Colonic mucosa (tissue), 4 donors: ENCODE measurements at regions of chr16 and their contacts with region 1.

Region 1: DNA sequence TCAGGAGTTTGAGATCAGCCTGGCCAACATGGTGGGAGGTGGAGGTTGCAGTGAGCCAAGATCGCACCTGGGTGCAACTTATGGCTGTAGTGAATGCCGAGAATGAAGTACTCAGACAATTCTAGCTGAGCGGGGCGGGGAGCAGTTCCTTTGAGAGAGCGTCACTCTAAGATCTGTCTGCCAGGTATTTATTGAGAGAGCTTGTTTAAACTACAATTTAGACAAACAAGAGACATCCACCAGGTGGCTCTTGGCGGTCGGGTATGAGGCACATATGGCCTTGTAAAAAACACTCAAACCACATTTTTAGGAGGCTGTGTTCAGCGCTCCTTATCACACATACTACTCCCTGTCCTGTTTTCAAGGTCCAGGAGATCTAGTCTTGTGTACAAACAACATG is 40.6 kb upstream of the CDH1 start:
- DNase-seq: peak; percentile 65
- H3K4me3 ChIP-seq: no peak overlapping the region
- H3K27ac ChIP-seq: no peak overlapping the region
- H3K4me1 ChIP-seq: no peaks in the 10 kb centered on the region
- H3K27me3 ChIP-seq: no peaks in the 10 kb centered on the region
- CTCF ChIP-seq: no peak

Region 2: DNA sequence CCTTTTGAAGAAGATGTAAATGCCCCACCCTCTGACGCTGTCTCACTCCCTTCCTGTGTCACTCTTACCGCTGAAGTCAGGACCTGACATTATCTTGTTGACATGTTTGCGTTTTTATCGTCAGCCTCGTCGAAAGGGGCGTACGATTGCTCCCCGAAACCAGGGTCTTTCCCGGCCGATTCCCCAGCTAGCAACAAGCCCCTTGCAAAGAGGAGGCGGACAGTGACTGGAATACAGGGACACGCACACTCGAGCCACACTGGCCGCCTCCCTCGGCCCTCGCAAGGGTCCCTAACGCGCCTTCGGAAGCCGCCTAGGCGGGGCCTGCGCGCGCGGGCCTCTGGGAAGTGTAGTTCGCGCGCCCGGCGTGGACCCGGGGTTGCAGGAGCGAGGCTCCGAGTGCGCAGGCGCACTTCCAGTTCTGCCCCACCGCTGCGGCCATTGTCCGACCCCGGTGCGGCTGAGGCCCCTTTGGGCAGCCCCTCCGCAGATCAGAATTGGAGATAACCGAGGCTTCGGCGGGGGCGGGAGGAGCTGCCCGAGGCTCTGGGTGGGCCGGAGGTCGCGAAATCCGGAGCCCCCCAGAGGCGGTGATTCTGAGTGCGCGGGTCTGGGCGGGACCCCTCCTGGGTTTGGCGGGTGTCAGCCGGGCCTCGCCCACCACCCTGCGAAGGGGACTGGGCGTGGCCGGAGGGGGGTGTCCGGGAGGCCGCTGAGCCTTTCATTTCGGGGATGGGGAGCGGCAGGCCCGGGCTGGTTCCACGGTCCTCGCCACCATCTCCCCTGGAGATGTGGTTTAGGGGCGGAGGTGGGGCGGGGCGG is 157.4 kb before region 1 on chr16 and contains the start of gene ZFP90:
- intact Hi-C with region 1: loop called (anchors 10 kb)
- DNase-seq: peak; percentile 87
- H3K4me3 ChIP-seq: peak within 1 kb of the TSS; percentile 99
- H3K27ac ChIP-seq: peak within 1 kb of the TSS; percentile 62
- H3K4me1 ChIP-seq: no peaks in the 10 kb centered on the region
- H3K27me3 ChIP-seq: no peaks in the 10 kb centered on the region
- CTCF ChIP-seq: no peak
- total RNA-seq, gene ZFP90: 10.2 to 10.3 TPM